Sigmoid colon (tissue), 7 donors: ENCODE measurements at regions of chr5 and their contacts with region 1.

Region 1: DNA sequence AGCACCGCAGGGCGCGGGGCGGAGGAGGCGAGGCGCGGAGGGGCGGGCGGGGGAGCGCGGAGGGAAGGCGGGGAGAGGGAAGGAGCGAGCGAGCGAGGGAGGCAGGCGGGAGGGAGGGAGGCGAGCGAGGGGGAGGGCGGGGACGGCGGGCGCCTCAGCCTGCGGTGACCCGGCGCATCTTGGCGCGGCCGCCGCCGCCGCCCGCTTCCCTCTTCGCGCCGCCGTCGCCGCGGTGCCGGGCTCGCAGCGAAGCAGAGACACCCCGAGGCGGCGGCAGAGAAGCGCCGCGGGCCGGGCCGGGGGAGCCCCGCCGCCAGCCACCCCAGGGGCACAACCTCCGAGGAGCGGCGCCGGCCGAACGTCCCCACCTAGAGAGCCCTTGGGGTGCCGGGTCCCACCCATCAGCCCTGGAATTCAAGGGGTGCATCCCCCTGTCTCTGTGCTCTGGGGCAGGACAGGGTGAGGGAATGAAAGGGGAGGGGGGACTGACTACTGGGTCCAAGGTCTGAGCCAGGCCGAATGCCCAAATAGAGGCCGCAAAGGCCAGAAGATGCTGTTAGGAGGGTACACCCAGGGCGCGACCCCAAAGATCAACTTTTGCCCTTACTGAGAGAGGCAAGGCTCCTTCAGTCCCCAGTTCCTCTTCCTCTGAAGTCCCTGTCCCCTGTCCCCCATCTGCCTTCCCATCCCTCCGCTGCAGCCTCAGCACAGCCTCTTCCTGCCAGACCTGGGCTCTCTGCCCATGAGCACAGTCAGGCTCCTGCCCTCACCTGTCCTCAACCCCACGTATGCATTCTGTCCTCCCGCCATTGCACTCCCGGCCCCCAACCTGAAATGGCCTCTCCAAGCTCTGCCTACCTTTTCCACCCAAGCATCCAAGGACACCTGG is at the start of gene ADAMTS2:
- DNase-seq: peak; percentile 88
- H3K4me3 ChIP-seq: peak within 1 kb of the TSS; percentile 53 to 87 (median 73)
- H3K27ac ChIP-seq: peak within 1 kb of the TSS; percentile 69 to 81 (median 74)
- H3K4me1 ChIP-seq: peaks cover 0 to 31% (median 26%) of the 10 kb centered on the region in 4 donors
- H3K27me3 ChIP-seq: no peaks in the 10 kb centered on the region
- CTCF ChIP-seq: no peak
- EP300 ChIP-seq: no peak
- POLR2A ChIP-seq: no peak
- total RNA-seq, gene ADAMTS2: 9.2 to 33.2 (median 14.6) TPM

Region 2: GRCh38 chr5:179115845-179116524 is 229.7 kb before region 1 on chr5:
- intact Hi-C with region 1: no loop called
- DNase-seq: peak; percentile 27
- H3K4me3 ChIP-seq: no peak overlapping the region
- H3K27ac ChIP-seq: no peak overlapping the region
- H3K4me1 ChIP-seq: no peaks in the 10 kb centered on the region
- H3K27me3 ChIP-seq: no peaks in the 10 kb centered on the region
- CTCF ChIP-seq: no peak
- EP300 ChIP-seq: no peak
- POLR2A ChIP-seq: no peak

Region 3: GRCh38 chr5:179166886-179167841 is 178.5 kb before region 1 on chr5:
- intact Hi-C with region 1: loop called (anchors 2 kb)
- DNase-seq: peak; percentile 70
- H3K4me3 ChIP-seq: peak overlapping the region in 3 of 4 donors; percentile 20 to 39 (median 36)
- H3K27ac ChIP-seq: no peak overlapping the region
- H3K4me1 ChIP-seq: peaks cover 0 to 15% (median 11%) of the 10 kb centered on the region in 4 donors
- H3K27me3 ChIP-seq: no peaks in the 10 kb centered on the region
- CTCF ChIP-seq: peak; percentile 46 to 99 (median 64)
- EP300 ChIP-seq: no peak
- POLR2A ChIP-seq: no peak

Region 4: DNA sequence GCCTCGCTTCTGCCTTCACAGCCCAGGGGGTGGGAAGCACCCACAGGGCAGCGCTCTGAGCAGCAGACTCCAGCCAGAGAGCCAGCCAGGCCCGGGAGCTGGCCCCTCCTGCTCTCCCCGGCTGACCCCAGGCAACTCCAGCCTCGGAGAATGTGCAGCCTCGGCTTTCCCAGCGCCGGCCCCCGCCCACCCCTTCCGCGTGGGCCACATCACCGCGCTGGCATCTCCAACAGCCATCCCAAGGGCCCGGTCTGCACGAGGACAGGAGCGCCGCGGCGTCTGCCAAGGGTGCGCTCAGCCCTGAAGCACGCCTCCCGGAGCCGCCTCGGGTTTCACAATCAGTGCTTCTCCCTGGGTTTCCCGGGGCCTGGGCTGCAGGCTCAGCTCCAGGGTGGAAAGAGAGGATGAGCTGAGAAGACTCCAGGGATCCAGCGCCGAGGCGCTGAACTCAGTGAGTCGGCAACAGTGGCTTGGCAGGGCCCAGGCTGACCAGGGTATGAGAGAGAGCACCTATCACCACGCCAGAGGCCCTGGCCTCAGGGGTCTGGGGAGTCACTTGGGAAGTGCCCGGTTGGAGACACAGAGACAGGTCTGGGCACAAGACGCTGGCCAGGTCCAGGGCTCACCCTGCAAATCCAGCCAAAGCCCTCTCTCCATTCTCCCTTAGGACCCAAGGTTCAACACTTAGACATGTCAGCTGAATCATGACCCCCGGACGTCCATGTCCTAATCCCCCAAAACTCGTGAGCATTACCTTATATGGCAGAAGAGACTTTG is 80.0 kb before region 1 on chr5:
- intact Hi-C with region 1: loop called (anchors 5 kb)
- DNase-seq: peak; percentile 99
- H3K4me3 ChIP-seq: peak overlapping the region in 3 of 4 donors; percentile 14 to 30 (median 28)
- H3K27ac ChIP-seq: peak overlapping the region; percentile 82 to 92 (median 86)
- H3K4me1 ChIP-seq: peaks cover 0 to 51% (median 43%) of the 10 kb centered on the region in 4 donors
- H3K27me3 ChIP-seq: no peaks in the 10 kb centered on the region
- CTCF ChIP-seq: no peak
- EP300 ChIP-seq: peak in 2 of 4 donors; percentile 62 to 84
- POLR2A ChIP-seq: peak in 1 of 2 donors; percentile 20

Region 5: DNA sequence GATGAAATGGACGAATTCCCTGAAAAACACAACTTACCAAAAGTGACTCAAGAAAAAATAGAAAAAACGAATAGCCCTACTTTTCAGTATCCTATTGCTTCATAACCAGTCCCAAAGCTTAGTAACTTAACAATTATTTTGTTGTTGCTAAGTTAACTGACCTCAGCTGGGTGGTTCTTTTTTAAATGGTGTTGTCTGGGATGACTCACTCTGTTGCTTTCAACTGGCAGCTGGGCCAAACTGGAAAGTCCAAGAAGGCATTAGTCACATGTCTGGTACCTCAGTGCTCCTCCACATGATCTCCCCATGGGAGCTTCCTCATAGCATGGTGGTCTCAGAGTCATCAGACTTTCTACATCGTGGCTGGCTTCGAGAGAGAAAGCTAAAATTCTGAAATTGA is 47.4 kb after region 1 on chr5:
- intact Hi-C with region 1: no loop called
- DNase-seq: peak; percentile 64
- H3K4me3 ChIP-seq: no peak overlapping the region
- H3K27ac ChIP-seq: no peak overlapping the region
- H3K4me1 ChIP-seq: no peaks in the 10 kb centered on the region
- H3K27me3 ChIP-seq: no peaks in the 10 kb centered on the region
- CTCF ChIP-seq: no peak
- EP300 ChIP-seq: no peak
- POLR2A ChIP-seq: no peak

Region 6: DNA sequence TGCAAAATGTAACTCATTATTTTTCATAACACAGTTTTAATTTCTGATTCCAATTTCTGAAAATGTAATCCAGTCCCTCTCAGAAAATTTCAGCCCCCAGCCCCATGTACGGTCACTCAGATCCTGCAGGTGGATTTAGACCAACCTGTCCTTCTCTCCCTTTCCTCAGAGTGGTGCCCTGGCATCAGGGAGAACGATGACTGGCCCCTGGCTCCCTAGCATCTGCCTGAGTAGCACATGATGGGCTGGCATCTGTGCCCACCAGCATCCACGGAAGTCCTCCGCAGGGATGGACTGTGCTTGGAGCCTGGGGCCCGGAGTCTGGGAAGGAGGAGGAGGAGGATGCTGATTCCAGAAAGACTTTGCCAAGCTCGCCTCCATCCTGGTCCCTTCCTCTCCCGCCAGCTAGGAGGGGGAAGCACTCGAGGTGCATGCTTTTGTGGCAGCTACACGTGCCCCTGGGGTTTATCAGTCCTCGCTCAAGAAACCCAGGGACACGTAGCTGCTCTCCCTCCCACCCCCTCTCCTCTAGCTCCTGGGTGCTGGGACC is 150.3 kb after region 1 on chr5:
- intact Hi-C with region 1: loop called (anchors 10 kb)
- DNase-seq: no peak
- H3K4me3 ChIP-seq: no peak overlapping the region
- H3K27ac ChIP-seq: no peak overlapping the region
- H3K4me1 ChIP-seq: no peaks in the 10 kb centered on the region
- H3K27me3 ChIP-seq: peaks cover 0 to 14% (median 0%) of the 10 kb centered on the region in 3 donors
- CTCF ChIP-seq: no peak
- EP300 ChIP-seq: no peak
- POLR2A ChIP-seq: no peak